ENCODE measurements at regions of chr19 and their contacts with region 1.

Region 1: DNA sequence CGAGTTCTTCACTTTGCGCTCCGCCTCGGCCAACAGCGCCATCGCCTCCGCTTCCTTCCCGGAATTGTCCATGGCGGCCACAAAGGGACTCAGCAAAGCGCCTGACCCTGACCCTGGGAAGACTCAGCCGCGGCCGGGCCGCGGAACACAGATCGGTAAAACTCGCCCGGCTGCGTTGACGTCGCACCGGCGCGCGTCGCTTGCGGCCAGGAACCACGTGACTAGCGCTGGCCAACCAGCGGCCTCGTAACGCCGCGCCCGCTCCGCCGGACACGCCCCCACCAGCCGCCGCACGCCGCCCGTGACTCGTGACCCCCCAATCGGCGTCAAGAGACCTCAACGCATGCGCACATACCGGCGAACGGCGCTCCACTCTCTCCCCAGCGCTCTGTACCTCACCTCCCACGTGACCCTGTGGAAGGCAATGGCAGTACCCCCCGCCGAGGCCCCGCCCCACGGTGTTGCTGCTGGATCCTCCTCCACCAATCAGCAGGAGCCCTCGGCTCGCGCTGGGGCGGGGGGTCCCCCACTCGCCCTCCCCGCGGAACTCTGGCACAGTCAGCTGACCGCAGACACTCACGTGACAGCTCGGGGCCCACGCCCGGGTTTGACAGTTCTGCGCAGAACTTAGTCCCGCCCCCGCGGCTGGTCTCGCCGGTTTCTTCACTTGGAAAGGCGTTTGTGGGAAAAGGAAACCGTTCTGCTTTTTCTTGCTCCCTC is at the start of gene NAPA:
- DNase-seq: peak; percentile 100
- H3K4me3 ChIP-seq: peak within 1 kb of the TSS; percentile 82 to 98 (median 92)
- H3K27ac ChIP-seq: peak within 1 kb of the TSS; percentile 95 to 99 (median 98)
- H3K4me1 ChIP-seq: peaks cover 33 to 46% (median 38%) of the 10 kb centered on the region in 4 donors
- H3K27me3 ChIP-seq: no peaks in the 10 kb centered on the region
- CTCF ChIP-seq: no peak
- EP300 ChIP-seq: no peak
- POLR2A ChIP-seq: peak; percentile 99
- total RNA-seq, gene NAPA: 94.8 to 138 (median 114) TPM

Region 2: GRCh38 chr19:47436712-47437401 is 78.2 kb before region 1 on chr19:
- in situ Hi-C with region 1: loop called in 1 of 4 experiments (anchors 10 kb)
- intact Hi-C with region 1: no loop called
- DNase-seq: peak; percentile 85
- H3K4me3 ChIP-seq: no peak overlapping the region
- H3K27ac ChIP-seq: no peak overlapping the region
- H3K4me1 ChIP-seq: no peaks in the 10 kb centered on the region
- H3K27me3 ChIP-seq: peaks cover 57% of the 10 kb centered on the region
- CTCF ChIP-seq: peak; percentile 88 to 93 (median 90)
- EP300 ChIP-seq: no peak
- POLR2A ChIP-seq: no peak

Region 3: GRCh38 chr19:47600246-47601179 is 85.5 kb after region 1 on chr19:
- in situ Hi-C with region 1: loop called in 2 of 4 experiments (anchors 5 to 10 kb)
- intact Hi-C with region 1: loop called (anchors 2 kb)
- DNase-seq: peak; percentile 100
- H3K4me3 ChIP-seq: peak overlapping the region; percentile 28 to 78 (median 40)
- H3K27ac ChIP-seq: peak overlapping the region; percentile 89 to 96 (median 94)
- H3K4me1 ChIP-seq: peaks cover 5 to 33% (median 20%) of the 10 kb centered on the region in 4 donors
- H3K27me3 ChIP-seq: no peaks in the 10 kb centered on the region
- CTCF ChIP-seq: peak in 1 of 5 experiments; percentile 9
- EP300 ChIP-seq: no peak
- POLR2A ChIP-seq: peak; percentile 92

Region 4: DNA sequence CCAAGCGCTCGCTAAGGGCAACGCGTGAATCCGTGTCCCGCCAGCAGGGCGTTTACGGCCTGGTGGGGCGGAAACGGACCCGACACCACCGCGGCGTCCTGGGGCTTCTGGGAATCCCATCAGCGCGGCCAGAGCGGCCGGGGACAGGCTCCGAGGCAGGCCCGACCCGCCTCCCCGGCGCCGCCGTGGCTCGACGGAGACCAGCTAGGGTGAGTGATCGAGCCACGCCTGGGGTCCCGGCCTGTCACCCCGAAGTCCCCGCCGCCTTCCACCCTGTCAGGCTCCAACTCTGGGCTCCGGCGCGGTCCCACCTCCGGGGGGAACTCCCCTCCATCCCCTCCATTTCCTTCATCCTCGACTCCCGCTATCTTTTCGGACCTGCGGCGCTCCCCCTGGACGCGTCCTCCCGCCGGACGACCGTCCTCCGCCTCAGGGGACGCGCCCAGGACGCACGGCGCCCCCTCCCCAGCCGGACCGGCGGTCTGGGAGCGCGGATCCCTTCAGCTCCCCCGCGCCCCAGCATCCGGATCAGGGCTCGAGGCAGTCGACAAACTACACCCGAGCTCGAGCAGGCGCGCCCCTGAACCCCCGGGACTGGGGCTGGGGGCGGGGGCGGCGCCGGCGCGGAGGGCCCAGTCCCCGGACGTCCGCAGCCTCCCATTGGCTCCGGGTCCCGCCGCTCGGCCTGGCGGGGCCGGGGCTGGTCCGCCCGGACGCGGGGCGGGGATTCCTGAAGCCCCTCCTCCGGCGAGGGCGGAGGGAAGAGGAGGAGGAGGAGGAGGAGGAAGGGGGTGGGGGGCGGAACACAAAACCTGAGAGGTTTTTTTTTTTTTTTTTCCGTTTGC is 93.3 kb after region 1 on chr19:
- in situ Hi-C with region 1: loop called in 2 of 4 experiments (anchors 5 to 10 kb)
- intact Hi-C with region 1: no loop called
- DNase-seq: peak; percentile 97
- H3K4me3 ChIP-seq: peak overlapping the region; percentile 81 to 97 (median 88)
- H3K27ac ChIP-seq: peak overlapping the region; percentile 97 to 98 (median 98)
- H3K4me1 ChIP-seq: peaks cover 22 to 40% (median 25%) of the 10 kb centered on the region in 4 donors
- H3K27me3 ChIP-seq: no peaks in the 10 kb centered on the region
- CTCF ChIP-seq: peak; percentile 31 to 74 (median 47)
- EP300 ChIP-seq: no peak
- POLR2A ChIP-seq: peak; percentile 80

Region 5: GRCh38 chr19:47707135-47707925 is 192.3 kb after region 1 on chr19:
- in situ Hi-C with region 1: no loop called
- intact Hi-C with region 1: loop called (anchors 10 kb)
- DNase-seq: peak; percentile 82
- H3K4me3 ChIP-seq: no peak overlapping the region
- H3K27ac ChIP-seq: no peak overlapping the region
- H3K4me1 ChIP-seq: peaks cover 0 to 13% (median 7%) of the 10 kb centered on the region in 4 donors
- H3K27me3 ChIP-seq: peaks cover 17% of the 10 kb centered on the region
- CTCF ChIP-seq: peak; percentile 81 to 88 (median 83)
- EP300 ChIP-seq: no peak
- POLR2A ChIP-seq: no peak

Region 6: GRCh38 chr19:47776568-47776967 is 261.5 kb after region 1 on chr19:
- in situ Hi-C with region 1: no loop called
- intact Hi-C with region 1: loop called (anchors 10 kb)
- DNase-seq: no peak
- H3K4me3 ChIP-seq: no peak overlapping the region
- H3K27ac ChIP-seq: peak overlapping the region; percentile 95 to 99 (median 96)
- H3K4me1 ChIP-seq: peaks cover 14 to 44% (median 35%) of the 10 kb centered on the region in 4 donors
- H3K27me3 ChIP-seq: no peaks in the 10 kb centered on the region
- CTCF ChIP-seq: no peak
- EP300 ChIP-seq: peak; percentile 59
- POLR2A ChIP-seq: peak; percentile 32

Measured in transverse colon (tissue), 4 donors.